Mammary epithelial cell (primary cell): ENCODE measurements at regions of chr22 and their contacts with region 1.

Region 1: GRCh38 chr22:40764763-40765441 is 54.2 kb downstream of the SLC25A17 start:
- DNase-seq: no peak
- H3K4me3 ChIP-seq: no peak overlapping the region
- H3K27ac ChIP-seq: no peak overlapping the region
- H3K4me1 ChIP-seq: no peaks in the 10 kb centered on the region
- H3K27me3 ChIP-seq: no peaks in the 10 kb centered on the region
- CTCF ChIP-seq: no peak

Region 2: GRCh38 chr22:40487663-40488249 is 277.1 kb before region 1 on chr22:
- CTCF ChIA-PET with region 1: no interaction called
- dilution Hi-C with region 1: loop called (anchors 5 kb)
- in situ Hi-C with region 1: no loop called
- intact Hi-C with region 1: no loop called
- DNase-seq: no peak
- H3K4me3 ChIP-seq: no peak overlapping the region
- H3K27ac ChIP-seq: peak overlapping the region; percentile 83
- H3K4me1 ChIP-seq: peaks cover 43% of the 10 kb centered on the region
- H3K27me3 ChIP-seq: no peaks in the 10 kb centered on the region
- CTCF ChIP-seq: peak; percentile 81 to 86

Region 3: DNA sequence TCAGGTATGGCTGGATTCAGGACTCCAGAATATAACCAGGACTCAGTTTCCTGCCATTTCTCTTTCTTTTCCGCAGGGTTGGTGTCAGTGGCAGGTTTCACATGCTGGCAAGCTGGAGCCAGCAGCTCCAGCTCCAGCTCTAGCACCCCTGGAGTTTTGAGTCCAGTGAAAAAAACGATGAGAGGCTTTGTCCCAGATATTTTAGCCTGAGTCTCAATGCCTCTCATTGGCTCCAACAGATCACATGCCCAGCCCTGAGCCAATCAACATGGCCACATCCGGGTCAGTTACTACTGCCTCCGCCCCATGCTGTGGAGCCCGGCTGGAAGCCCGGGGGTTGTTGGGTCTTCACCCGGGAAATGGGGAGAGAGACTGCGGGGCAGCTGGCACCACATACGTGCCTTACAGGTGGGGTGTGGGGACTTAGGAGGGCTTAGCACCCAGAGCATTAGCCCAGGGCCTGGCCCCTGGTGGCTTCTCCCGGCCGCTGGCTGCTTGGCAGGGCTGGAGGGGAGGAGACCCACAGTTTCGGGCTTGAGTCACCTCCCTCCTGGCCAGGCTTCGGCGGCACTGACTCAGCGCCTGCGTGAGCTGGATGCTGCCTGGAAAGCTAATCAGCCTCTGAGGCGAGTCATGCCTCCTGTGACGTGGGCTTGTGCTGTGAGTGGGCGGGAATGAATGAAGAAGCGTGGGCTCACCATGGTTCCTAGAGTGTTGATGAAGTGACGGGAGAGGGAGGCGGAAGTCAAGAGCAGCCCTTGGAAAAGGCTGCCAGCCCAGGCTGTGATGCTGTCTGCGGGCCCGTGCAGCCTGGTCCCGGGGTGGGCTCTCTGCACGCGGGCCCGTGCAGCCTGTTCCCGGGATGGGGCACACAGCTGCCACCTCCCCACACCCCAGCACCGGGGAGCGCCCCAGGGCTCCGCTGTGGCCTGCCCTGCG is 113.1 kb before region 1 on chr22:
- CTCF ChIA-PET with region 1: no interaction called
- dilution Hi-C with region 1: no loop called
- in situ Hi-C with region 1: no loop called
- intact Hi-C with region 1: loop called (anchors 1 kb)
- DNase-seq: peak; percentile 100
- H3K4me3 ChIP-seq: peak overlapping the region; percentile 51 to 55 (median 52)
- H3K27ac ChIP-seq: peak overlapping the region; percentile 99
- H3K4me1 ChIP-seq: peaks cover 34% of the 10 kb centered on the region
- H3K27me3 ChIP-seq: no peaks in the 10 kb centered on the region
- CTCF ChIP-seq: peak in 1 of 2 donors; percentile 21

Region 4: GRCh38 chr22:40679964-40680818 is 84.7 kb before region 1 on chr22:
- CTCF ChIA-PET with region 1: interaction called, 16 read pairs
- dilution Hi-C with region 1: no loop called
- in situ Hi-C with region 1: no loop called
- intact Hi-C with region 1: loop called (anchors 1 kb)
- DNase-seq: no peak
- H3K4me3 ChIP-seq: no peak overlapping the region
- H3K27ac ChIP-seq: no peak overlapping the region
- H3K4me1 ChIP-seq: peaks cover 27% of the 10 kb centered on the region
- H3K27me3 ChIP-seq: no peaks in the 10 kb centered on the region
- CTCF ChIP-seq: peak in 1 of 2 donors; percentile 10

Region 5: DNA sequence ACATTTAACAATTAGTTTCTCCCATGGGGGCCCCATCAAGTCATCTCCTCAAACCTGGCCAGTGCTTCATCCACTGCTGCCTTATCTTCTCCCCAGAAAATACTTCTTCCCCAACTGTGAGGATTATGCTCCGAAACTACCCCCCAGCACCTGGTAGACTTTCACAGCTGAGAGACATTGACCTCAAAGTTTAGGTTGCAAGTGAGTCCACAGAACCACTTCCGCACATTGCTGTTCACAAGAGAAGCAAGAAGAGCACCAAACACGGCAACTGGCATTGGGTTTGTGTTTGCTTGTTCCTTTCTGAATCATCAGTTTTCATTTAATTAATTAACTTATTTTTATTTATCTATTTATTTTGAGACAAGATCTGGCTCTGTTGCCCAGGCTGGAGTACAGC is 79.5 kb before region 1 on chr22:
- CTCF ChIA-PET with region 1: interaction called, 16 read pairs
- dilution Hi-C with region 1: no loop called
- in situ Hi-C with region 1: no loop called
- intact Hi-C with region 1: loop called (anchors 1 kb)
- DNase-seq: no peak
- H3K4me3 ChIP-seq: no peak overlapping the region
- H3K27ac ChIP-seq: no peak overlapping the region
- H3K4me1 ChIP-seq: peaks cover 11% of the 10 kb centered on the region
- H3K27me3 ChIP-seq: no peaks in the 10 kb centered on the region
- CTCF ChIP-seq: no peak

Region 6: DNA sequence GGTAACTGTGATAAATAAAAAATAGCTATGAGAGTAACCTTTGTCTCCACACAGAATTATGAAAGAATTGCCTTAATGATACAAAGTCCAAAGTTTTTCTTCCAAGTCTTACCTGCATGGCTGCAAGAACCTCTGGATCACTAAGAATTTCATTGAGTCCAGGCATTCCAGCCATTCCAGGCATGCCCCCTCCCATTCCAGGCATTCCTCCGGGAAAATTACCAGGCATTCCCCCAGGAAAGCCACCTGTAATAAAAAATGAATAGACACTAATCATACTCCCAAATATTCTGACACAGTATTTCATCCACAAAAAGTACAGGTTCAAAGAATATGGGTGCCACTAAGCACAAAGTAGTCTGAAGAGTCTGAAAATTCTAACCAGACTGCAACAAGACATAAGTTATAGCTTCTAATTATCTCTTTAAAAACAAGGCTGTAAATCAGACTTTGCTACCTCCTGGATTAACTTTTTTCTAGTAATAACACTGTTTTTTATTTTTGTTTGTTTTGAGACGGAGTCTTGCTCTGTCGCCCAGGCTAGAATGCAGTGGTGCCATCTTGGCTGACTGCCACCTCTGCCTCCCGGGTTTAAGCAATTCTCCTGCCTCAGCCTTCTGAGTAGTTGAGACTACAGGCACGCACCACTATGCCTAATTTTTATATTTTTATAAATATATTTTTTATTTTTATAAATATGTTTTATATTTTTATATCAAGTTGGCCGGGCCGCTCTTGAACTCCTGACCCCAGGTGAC is 62.3 kb after region 1 on chr22:
- CTCF ChIA-PET with region 1: no interaction called
- dilution Hi-C with region 1: no loop called
- in situ Hi-C with region 1: no loop called
- intact Hi-C with region 1: no loop called
- DNase-seq: no peak
- H3K4me3 ChIP-seq: no peak overlapping the region
- H3K27ac ChIP-seq: no peak overlapping the region
- H3K4me1 ChIP-seq: no peaks in the 10 kb centered on the region
- H3K27me3 ChIP-seq: no peaks in the 10 kb centered on the region
- CTCF ChIP-seq: no peak

Region 7: DNA sequence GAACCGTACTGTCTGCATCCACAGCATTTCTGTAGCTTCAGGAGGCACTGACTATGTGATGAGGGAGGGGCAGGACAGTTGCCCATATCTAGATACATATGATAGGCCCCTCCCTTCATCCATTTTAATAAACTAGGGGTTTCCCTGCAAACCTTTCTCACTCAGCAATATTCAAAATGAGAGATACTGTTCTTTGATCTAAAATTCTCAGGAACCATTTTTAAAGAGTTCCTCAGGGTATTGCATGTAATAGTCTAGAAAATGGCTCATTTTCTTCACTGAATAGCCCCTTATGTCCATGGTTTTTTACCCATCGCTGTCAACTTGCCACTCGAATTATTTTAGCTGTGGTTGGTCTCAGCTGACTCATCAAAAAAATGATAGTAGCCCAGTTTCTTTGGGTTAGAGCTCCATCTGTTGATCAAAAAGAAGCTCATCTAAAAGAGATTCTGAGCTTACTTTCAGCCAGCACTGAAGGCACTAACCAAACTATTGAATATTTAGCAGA is 134.0 kb after region 1 on chr22:
- CTCF ChIA-PET with region 1: no interaction called
- dilution Hi-C with region 1: loop called (anchors 10 kb)
- in situ Hi-C with region 1: no loop called
- intact Hi-C with region 1: loop called (anchors 1 kb)
- DNase-seq: peak; percentile 52
- H3K4me3 ChIP-seq: no peak overlapping the region
- H3K27ac ChIP-seq: no peak overlapping the region
- H3K4me1 ChIP-seq: peaks cover 2% of the 10 kb centered on the region
- H3K27me3 ChIP-seq: no peaks in the 10 kb centered on the region
- CTCF ChIP-seq: peak; percentile 56 to 59